A549 (cell line): ENCODE measurements at regions of chr14 and their contacts with region 1.

Region 1: DNA sequence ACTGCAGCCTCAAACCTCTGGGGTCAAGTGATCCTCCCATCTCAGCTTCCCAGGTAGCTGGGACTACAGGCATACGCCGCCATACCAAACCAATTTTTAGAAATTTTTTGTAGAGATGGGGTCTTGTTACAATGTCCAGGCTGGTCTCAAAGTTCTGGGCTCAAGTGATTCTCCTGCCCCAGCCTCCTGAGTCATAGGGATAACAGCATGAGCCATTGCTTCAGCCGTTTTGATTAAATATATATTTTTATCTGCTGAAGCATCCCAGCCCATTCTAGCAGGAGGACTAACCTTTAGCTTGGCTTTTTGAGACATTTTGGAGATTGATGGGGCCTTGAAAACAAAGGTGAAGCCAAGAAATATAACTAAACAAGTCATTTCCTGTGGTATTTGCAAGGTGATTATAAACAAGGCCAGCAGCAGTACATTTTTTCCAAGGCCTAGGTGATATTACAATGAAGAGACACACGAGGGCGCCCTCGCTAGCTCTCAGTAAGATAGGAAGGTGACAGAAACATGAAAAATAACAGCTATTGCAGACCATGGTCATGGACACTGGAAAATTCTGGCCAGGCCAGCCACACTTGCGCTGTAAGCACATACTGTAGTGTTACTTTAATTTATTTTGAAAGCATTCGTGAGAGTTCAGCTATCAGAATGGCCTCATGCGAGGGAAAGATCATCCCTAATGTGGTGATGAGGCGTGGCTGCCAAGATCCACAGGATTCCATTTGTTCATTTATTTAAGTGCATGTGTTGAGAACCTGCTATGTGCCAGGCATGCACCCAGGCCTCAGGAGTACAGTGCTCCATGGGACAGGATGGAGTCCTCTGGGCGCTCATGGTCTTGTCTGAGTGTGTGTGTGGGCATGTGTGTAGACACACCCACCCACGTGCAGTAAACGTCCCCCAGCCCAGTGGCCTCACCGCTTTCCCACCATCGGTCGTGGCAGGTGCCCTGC is 63.5 kb downstream of the DGLUCY start:
- DNase-seq: peak; percentile 63 to 66
- ATAC-seq: peak; percentile 76 to 81
- H3K4me3 ChIP-seq: no peak overlapping the region
- H3K27ac ChIP-seq: no peak overlapping the region
- H3K4me1 ChIP-seq: no peaks in the 10 kb centered on the region
- CTCF ChIP-seq: peak; percentile 76
- EP300 ChIP-seq: no peak
- POLR2A ChIP-seq: no peak
- RAD21 ChIP-seq: peak; percentile 66 to 70

Region 2: GRCh38 chr14:90903101-90903500 is 274.3 kb before region 1 on chr14:
- CTCF ChIA-PET with region 1: interaction called, 249 read pairs
- POLR2A ChIA-PET with region 1: interaction called, 3 read pairs
- DNase-seq: peak; percentile 63 to 74
- ATAC-seq: peak; percentile 88 to 94
- H3K4me3 ChIP-seq: no peak overlapping the region
- H3K27ac ChIP-seq: no peak overlapping the region
- H3K4me1 ChIP-seq: no peaks in the 10 kb centered on the region
- CTCF ChIP-seq: peak; percentile 92
- EP300 ChIP-seq: no peak
- POLR2A ChIP-seq: no peak
- RAD21 ChIP-seq: peak; percentile 88 to 92

Region 3: GRCh38 chr14:91035855-91036254 is 141.5 kb before region 1 on chr14:
- CTCF ChIA-PET with region 1: interaction called, 12 read pairs
- POLR2A ChIA-PET with region 1: no interaction called
- DNase-seq: no peak
- ATAC-seq: no peak
- H3K4me3 ChIP-seq: no peak overlapping the region
- H3K27ac ChIP-seq: no peak overlapping the region
- H3K4me1 ChIP-seq: no peaks in the 10 kb centered on the region
- CTCF ChIP-seq: no peak
- EP300 ChIP-seq: no peak
- POLR2A ChIP-seq: no peak
- RAD21 ChIP-seq: no peak

Region 4: DNA sequence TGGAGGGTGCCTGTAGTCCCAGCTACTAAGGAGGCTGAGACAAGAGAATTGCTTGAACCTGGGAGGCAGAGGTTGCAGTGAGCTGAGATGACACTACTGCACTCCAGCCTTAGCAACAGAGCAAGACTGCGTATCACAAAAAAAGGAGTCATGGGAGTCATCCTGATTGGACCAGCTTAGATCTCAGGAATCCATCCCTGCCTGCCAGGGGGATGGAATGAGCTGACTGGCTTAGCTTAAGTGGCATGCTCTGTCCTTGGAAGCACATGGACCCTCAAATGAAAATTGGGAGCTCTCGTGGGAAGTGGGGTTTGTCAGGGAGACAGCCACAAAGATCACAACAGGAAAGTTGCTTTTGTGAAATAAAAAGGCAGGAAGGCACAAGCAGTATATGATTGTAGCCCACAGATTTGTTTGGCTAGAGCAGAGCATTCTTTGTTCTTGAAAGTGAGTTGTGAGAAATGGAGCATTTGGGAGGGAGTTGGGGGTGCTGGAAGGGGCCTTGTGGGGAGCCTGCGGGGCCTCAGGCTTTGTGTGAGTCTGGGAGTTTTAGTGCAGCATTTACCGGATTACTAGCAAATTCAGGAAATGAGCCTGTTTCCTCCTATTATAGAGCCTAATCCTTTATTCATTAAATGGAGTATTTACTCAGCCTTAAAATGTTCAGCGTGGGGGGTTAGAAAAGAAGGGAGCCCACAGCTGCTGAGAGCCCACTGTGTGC is 32.8 kb before region 1 on chr14:
- CTCF ChIA-PET with region 1: interaction called, 16 read pairs
- POLR2A ChIA-PET with region 1: no interaction called
- DNase-seq: no peak
- ATAC-seq: no peak
- H3K4me3 ChIP-seq: no peak overlapping the region
- H3K27ac ChIP-seq: no peak overlapping the region
- H3K4me1 ChIP-seq: peaks cover 16% of the 10 kb centered on the region
- CTCF ChIP-seq: no peak
- EP300 ChIP-seq: no peak
- POLR2A ChIP-seq: no peak
- RAD21 ChIP-seq: no peak

Region 5: DNA sequence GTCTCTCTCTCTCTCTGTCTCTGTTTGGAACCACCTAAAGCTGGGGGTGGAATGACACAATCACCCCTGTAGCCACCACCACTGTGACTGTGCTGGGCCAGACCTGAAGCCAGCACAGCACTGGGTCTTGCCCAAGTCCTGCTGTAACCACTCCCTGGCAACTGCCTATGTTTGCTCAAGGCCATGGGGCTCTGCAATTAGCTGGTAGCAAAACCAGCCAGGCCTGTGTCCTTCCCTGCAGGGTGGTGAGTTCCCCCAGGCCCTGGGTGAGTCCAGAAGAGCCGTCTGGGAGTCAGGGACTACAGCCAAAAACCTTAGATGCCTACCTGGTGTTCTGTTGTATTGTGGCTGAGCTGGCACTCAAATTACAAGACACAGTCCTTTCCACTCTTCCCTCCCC is 12.7 kb before region 1 on chr14:
- CTCF ChIA-PET with region 1: interaction called, 37 read pairs
- POLR2A ChIA-PET with region 1: no interaction called
- DNase-seq: no peak
- ATAC-seq: no peak
- H3K4me3 ChIP-seq: no peak overlapping the region
- H3K27ac ChIP-seq: no peak overlapping the region
- H3K4me1 ChIP-seq: no peaks in the 10 kb centered on the region
- CTCF ChIP-seq: no peak
- EP300 ChIP-seq: no peak
- POLR2A ChIP-seq: no peak
- RAD21 ChIP-seq: no peak

Region 6: DNA sequence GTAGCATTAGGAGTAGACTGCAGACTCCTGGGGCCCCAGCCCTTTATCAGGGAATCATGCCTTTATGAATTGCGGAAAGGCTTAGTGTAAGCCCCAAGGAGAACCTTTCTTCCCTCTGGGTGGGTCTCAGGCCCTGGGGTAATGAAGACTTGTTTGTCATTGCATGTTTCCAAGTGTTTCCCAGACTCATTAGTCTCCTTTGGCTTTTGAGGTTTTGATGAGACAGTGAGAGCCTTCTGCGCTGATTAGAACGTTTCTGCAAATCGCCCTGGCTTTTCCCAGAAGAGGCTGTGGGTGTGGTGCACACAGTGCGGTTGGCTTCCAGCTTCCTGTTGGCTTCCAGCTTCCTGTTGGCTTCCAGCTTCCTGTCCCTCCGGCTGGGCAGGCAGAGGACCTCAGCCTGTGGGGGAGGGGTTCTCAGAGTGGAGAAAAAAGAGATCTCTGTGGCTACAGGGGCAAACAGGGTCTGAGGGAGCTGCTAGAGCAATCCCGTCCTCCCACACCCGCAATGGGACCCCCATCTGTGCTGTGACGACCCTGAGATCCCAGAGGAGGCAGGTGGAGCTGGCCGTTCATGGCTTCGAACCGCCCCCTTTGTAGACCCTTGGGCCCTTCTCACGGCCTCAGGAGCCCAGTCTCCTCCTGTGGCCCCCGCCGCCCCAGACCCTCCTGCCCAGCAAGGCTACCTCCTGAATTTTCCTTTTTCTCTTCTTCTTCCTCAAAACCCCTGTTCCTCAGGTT is 25.1 kb after region 1 on chr14:
- CTCF ChIA-PET with region 1: interaction called, 15 read pairs
- POLR2A ChIA-PET with region 1: no interaction called
- DNase-seq: no peak
- ATAC-seq: no peak
- H3K4me3 ChIP-seq: no peak overlapping the region
- H3K27ac ChIP-seq: no peak overlapping the region
- H3K4me1 ChIP-seq: no peaks in the 10 kb centered on the region
- CTCF ChIP-seq: no peak
- EP300 ChIP-seq: no peak
- POLR2A ChIP-seq: no peak
- RAD21 ChIP-seq: no peak

Region 7: GRCh38 chr14:91286530-91286937 is 109.2 kb after region 1 on chr14:
- CTCF ChIA-PET with region 1: interaction called, 169 read pairs
- POLR2A ChIA-PET with region 1: no interaction called
- DNase-seq: peak; percentile 73 to 88
- ATAC-seq: peak; percentile 91 to 96
- H3K4me3 ChIP-seq: no peak overlapping the region
- H3K27ac ChIP-seq: no peak overlapping the region
- H3K4me1 ChIP-seq: no peaks in the 10 kb centered on the region
- CTCF ChIP-seq: peak; percentile 90
- EP300 ChIP-seq: no peak
- POLR2A ChIP-seq: no peak
- RAD21 ChIP-seq: peak; percentile 75 to 79